PC-3 (cell line): ENCODE measurements at regions of chr12 and their contacts with region 1.

Region 1: GRCh38 chr12:99444859-99445316 is 202.7 kb upstream of the GARIN6 start:
- DNase-seq: peak; percentile 78
- ATAC-seq: peak; percentile 82
- H3K4me3 ChIP-seq: no peak overlapping the region
- H3K27ac ChIP-seq: peak overlapping the region; percentile 15; the same call in 1 of the 2 replicates
- H3K4me1 ChIP-seq: peaks cover 16% of the 10 kb centered on the region
- H3K27me3 ChIP-seq: no peaks in the 10 kb centered on the region
- CTCF ChIP-seq: no peak

Region 2: GRCh38 chr12:99521664-99522063 is 76.8 kb after region 1 on chr12:
- CTCF ChIA-PET with region 1: no interaction called
- POLR2A ChIA-PET with region 1: no interaction called
- intact Hi-C with region 1: loop called (anchors 2 kb)
- DNase-seq: no peak
- ATAC-seq: no peak
- H3K4me3 ChIP-seq: no peak overlapping the region
- H3K27ac ChIP-seq: no peak overlapping the region
- H3K4me1 ChIP-seq: peaks cover 23% of the 10 kb centered on the region
- H3K27me3 ChIP-seq: no peaks in the 10 kb centered on the region
- CTCF ChIP-seq: no peak